ENCODE measurements at regions of chr17 and their contacts with region 1.

Region 1: GRCh38 chr17:66695098-66695497 is 139.8 kb upstream of the CACNG5 start:
- DNase-seq: no peak
- H3K4me3 ChIP-seq: no peak overlapping the region
- H3K4me3 Mint-ChIP-seq: no peak overlapping the region
- H3K27ac Mint-ChIP-seq: no peak overlapping the region
- H3K4me1 ChIP-seq: no peaks in the 10 kb centered on the region
- H3K4me1 Mint-ChIP-seq: no peaks in the 10 kb centered on the region
- H3K27me3 ChIP-seq: no peaks in the 10 kb centered on the region
- H3K27me3 Mint-ChIP-seq: no peaks in the 10 kb centered on the region
- CTCF ChIP-seq: no peak

Region 2: GRCh38 chr17:66403846-66404556 is 291.1 kb before region 1 on chr17:
- CTCF ChIA-PET with region 1: no interaction called
- POLR2A ChIA-PET with region 1: no interaction called
- intact Hi-C with region 1: no loop called
- DNase-seq: no peak
- H3K4me3 ChIP-seq: no peak overlapping the region
- H3K4me3 Mint-ChIP-seq: no peak overlapping the region
- H3K27ac Mint-ChIP-seq: no peak overlapping the region
- H3K4me1 ChIP-seq: peaks cover 2% of the 10 kb centered on the region; the same call in 1 of the 2 replicates
- H3K4me1 Mint-ChIP-seq: no peaks in the 10 kb centered on the region
- H3K27me3 ChIP-seq: no peaks in the 10 kb centered on the region
- H3K27me3 Mint-ChIP-seq: no peaks in the 10 kb centered on the region
- CTCF ChIP-seq: no peak

Region 3: DNA sequence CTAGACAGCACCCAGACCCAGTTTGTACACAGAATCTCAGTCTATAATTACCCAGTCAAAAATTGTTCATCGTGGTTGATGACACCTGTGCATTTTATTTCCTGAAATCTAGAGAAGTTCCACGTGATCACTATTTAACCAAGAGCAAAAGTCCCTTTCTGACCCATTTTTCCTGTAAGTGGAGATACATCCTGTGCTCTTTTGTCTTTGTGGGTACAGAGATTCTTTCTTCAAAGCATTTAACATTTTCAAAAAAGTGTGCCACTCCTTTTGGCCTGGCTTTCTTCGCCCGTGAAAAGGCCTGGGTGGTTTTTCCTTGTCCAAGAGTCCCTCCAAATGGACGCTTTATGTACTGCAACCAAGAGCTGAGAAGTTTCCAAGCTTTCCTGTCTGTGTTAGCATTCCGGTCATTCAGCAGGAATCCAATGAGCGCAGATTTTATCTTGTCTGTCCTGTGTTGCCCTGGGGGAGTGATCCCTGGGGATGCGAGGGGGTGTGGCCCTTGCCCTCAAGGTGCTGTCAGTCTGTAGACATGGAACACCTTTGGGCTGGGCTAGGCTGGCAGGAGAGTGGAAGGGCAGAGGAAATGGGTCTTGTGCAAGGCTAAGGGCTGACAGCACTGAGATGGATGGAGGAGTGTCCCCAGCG is 21.3 kb before region 1 on chr17:
- CTCF ChIA-PET with region 1: no interaction called
- POLR2A ChIA-PET with region 1: no interaction called
- intact Hi-C with region 1: no loop called
- DNase-seq: peak; percentile 54 to 72
- H3K4me3 ChIP-seq: no peak overlapping the region
- H3K4me3 Mint-ChIP-seq: no peak overlapping the region
- H3K27ac Mint-ChIP-seq: peak overlapping the region; percentile 14
- H3K4me1 ChIP-seq: peaks cover 13% of the 10 kb centered on the region
- H3K4me1 Mint-ChIP-seq: peaks cover 19% of the 10 kb centered on the region
- H3K27me3 ChIP-seq: no peaks in the 10 kb centered on the region
- H3K27me3 Mint-ChIP-seq: no peaks in the 10 kb centered on the region
- CTCF ChIP-seq: peak; percentile 66 to 81

Region 4: DNA sequence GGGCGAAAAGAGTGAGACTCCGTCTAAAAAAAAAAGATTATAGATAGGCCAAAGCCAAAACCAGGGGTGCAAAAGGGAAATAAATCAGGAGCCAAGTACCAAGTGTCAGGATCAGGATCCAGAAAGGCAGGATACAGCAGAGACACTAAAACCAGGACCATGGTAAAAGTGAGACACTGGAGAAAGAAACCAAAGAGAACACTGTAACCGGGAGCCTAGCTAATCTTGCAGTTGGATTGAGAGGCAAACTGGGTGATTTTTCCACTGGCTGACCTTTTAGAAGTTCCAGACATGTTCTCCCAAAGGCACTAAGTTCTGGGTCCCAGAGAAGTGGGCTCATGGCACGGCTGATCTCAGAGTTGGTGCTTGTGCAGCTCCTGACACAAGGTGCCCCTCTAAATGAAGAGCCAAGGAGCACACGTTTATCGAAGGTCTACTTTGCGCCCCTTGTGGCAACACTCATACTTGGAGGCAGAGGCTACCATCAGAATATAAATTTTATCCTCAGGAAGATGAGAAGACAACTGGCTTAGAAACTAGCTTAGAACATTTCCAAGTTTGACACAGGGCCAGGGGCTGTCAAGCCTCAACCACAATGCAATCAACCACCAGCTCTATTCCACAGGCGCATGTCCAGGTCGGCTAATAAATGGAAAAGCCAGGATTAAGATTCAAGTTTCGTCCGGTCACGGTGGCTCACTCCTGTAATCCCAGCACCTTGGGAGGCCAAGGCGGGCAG is 577.4 kb after region 1 on chr17:
- CTCF ChIA-PET with region 1: no interaction called
- POLR2A ChIA-PET with region 1: interaction called, 12 read pairs
- intact Hi-C with region 1: no loop called
- DNase-seq: no peak
- H3K4me3 ChIP-seq: no peak overlapping the region
- H3K4me3 Mint-ChIP-seq: no peak overlapping the region
- H3K27ac Mint-ChIP-seq: no peak overlapping the region
- H3K4me1 ChIP-seq: no peaks in the 10 kb centered on the region
- H3K4me1 Mint-ChIP-seq: no peaks in the 10 kb centered on the region
- H3K27me3 ChIP-seq: no peaks in the 10 kb centered on the region
- H3K27me3 Mint-ChIP-seq: no peaks in the 10 kb centered on the region
- CTCF ChIP-seq: peak in 1 of 2 experiments; percentile 21